ENCODE measurements at regions of chr3 and their contacts with region 1.

Region 1: GRCh38 chr3:13011498-13012227 is 61.6 kb downstream of the IQSEC1 start:
- DNase-seq: no peak
- H3K4me3 ChIP-seq: no peak overlapping the region
- H3K27ac ChIP-seq: peak overlapping the region in 1 of 2 donors; percentile 10
- H3K4me1 ChIP-seq: peaks cover 0 to 15% (median 5%) of the 10 kb centered on the region in 4 donors
- H3K27me3 ChIP-seq: no peaks in the 10 kb centered on the region
- CTCF ChIP-seq: no peak

Region 2: DNA sequence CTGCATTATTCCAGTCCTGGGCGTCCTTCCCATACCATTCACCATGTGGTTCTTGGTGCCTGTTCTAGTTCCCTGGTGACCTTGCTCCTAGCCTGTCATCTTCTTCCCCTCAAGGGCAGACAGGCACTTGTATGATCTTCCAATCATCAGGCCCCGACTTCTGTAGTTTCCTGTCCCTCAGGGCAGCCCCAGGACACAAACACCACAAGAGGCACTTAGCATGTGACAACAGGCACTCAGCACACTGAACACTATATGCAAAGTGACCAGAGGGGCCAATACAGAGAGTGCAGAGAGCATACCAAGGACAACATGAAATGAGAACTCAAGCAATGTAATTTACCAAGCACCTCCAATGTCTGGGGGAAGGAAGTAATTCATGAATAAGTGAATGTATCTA is 270.5 kb before region 1 on chr3:
- intact Hi-C with region 1: no loop called
- DNase-seq: no peak
- H3K4me3 ChIP-seq: no peak overlapping the region
- H3K27ac ChIP-seq: no peak overlapping the region
- H3K4me1 ChIP-seq: no peaks in the 10 kb centered on the region
- H3K27me3 ChIP-seq: peaks cover 0 to 2% of the 10 kb centered on the region in 2 donors
- CTCF ChIP-seq: no peak

Region 3: GRCh38 chr3:13073326-13074005 is 61.8 kb after region 1 on chr3 and contains the start of gene IQSEC1:
- intact Hi-C with region 1: loop called (anchors 10 kb)
- DNase-seq: peak; percentile 54 to 87
- H3K4me3 ChIP-seq: peak within 1 kb of the TSS; percentile 52 to 56
- H3K27ac ChIP-seq: peak within 1 kb of the TSS; percentile 67 to 76
- H3K4me1 ChIP-seq: peaks cover 0 to 45% (median 36%) of the 10 kb centered on the region in 4 donors
- H3K27me3 ChIP-seq: peaks cover 0 to 17% of the 10 kb centered on the region in 2 donors
- CTCF ChIP-seq: no peak

Region 4: DNA sequence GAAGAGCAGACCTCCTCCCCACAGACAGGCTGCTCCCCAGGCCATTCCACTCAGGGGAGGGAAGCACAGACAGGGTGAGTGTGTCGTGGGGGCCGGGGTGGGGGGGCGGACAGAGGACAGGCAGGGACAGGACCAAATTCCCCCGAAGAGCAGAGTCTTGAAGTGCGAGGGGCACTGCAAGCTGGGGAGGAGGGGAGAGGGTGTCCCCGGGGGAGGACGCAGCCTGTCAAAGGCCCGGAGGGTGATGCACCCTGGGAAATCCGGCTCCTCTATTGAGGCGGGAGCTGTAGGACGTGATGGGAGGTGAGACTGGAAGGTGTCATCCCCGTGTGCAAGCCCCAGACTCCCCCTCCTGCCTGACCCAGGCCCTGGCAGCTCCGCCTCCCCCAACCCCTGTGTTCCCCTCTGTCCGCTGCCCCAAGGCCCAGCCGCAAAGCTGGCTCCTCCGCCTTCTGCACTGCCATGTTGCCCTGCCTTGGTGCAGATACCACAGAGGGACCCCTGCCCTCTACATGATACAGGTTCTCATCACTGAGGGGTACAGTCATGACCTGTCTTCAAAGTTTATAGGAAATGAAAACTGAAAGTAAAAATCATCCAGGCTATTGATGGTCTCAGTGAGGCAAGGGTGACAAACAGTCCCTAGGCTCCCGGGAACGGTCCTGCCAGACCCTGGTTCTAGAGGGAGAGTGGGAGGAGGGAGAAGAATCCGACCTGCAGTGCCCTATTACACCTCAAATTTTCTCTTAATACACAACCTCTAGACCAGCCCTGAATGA is 137.9 kb after region 1 on chr3:
- intact Hi-C with region 1: no loop called
- DNase-seq: peak; percentile 10 to 33
- H3K4me3 ChIP-seq: no peak overlapping the region
- H3K27ac ChIP-seq: no peak overlapping the region
- H3K4me1 ChIP-seq: no peaks in the 10 kb centered on the region
- H3K27me3 ChIP-seq: peaks cover 0 to 21% of the 10 kb centered on the region in 2 donors
- CTCF ChIP-seq: no peak